CD4-positive, alpha-beta memory T cell (primary cell): ENCODE measurements at regions of chr2 and their contacts with region 1.

Region 1: GRCh38 chr2:11753886-11754699 is 7.7 kb downstream of the LPIN1 start:
- DNase-seq: peak; percentile 39 to 88 (median 44)
- H3K4me3 ChIP-seq: peak overlapping the region; percentile 19 to 43
- H3K4me3 Mint-ChIP-seq: peak overlapping the region; percentile 78 to 92 (median 84)
- H3K27ac ChIP-seq: peak overlapping the region; percentile 70
- H3K27ac Mint-ChIP-seq: peak overlapping the region; percentile 91 to 98 (median 95)
- H3K4me1 ChIP-seq: peaks cover 95% of the 10 kb centered on the region
- H3K4me1 Mint-ChIP-seq: peaks cover 60 to 93% (median 78%) of the 10 kb centered on the region in 4 donors
- H3K27me3 ChIP-seq: no peaks in the 10 kb centered on the region
- H3K27me3 Mint-ChIP-seq: no peaks in the 10 kb centered on the region

Region 2: GRCh38 chr2:11154923-11155380 is 599.1 kb before region 1 on chr2:
- CTCF ChIA-PET with region 1: no interaction called
- POLR2A ChIA-PET with region 1: no interaction called
- intact Hi-C with region 1: loop called (anchors 2 kb)
- DNase-seq: peak; percentile 95 to 98 (median 97)
- H3K4me3 ChIP-seq: peak overlapping the region; percentile 38 to 66
- H3K4me3 Mint-ChIP-seq: peak overlapping the region; percentile 81 to 88 (median 85)
- H3K27ac ChIP-seq: peak overlapping the region; percentile 68
- H3K27ac Mint-ChIP-seq: peak overlapping the region; percentile 85 to 93 (median 88)
- H3K4me1 ChIP-seq: peaks cover 23% of the 10 kb centered on the region
- H3K4me1 Mint-ChIP-seq: peaks cover 4 to 28% (median 21%) of the 10 kb centered on the region in 4 donors
- H3K27me3 ChIP-seq: no peaks in the 10 kb centered on the region
- H3K27me3 Mint-ChIP-seq: no peaks in the 10 kb centered on the region

Region 3: GRCh38 chr2:11738589-11739436 is 15.3 kb before region 1 on chr2:
- CTCF ChIA-PET with region 1: interaction called, 21 read pairs
- POLR2A ChIA-PET with region 1: interaction called, 46 read pairs
- intact Hi-C with region 1: no loop called
- DNase-seq: peak in 2 of 5 donors; percentile 31 to 49
- H3K4me3 ChIP-seq: no peak overlapping the region
- H3K4me3 Mint-ChIP-seq: no peak overlapping the region
- H3K27ac ChIP-seq: no peak overlapping the region
- H3K27ac Mint-ChIP-seq: peak overlapping the region in 1 of 7 donors; percentile 36
- H3K4me1 ChIP-seq: peaks cover 11% of the 10 kb centered on the region
- H3K4me1 Mint-ChIP-seq: peaks cover 3 to 20% (median 8%) of the 10 kb centered on the region in 4 donors
- H3K27me3 ChIP-seq: no peaks in the 10 kb centered on the region
- H3K27me3 Mint-ChIP-seq: peaks cover 0 to 3% of the 10 kb centered on the region in 2 donors

Region 4: DNA sequence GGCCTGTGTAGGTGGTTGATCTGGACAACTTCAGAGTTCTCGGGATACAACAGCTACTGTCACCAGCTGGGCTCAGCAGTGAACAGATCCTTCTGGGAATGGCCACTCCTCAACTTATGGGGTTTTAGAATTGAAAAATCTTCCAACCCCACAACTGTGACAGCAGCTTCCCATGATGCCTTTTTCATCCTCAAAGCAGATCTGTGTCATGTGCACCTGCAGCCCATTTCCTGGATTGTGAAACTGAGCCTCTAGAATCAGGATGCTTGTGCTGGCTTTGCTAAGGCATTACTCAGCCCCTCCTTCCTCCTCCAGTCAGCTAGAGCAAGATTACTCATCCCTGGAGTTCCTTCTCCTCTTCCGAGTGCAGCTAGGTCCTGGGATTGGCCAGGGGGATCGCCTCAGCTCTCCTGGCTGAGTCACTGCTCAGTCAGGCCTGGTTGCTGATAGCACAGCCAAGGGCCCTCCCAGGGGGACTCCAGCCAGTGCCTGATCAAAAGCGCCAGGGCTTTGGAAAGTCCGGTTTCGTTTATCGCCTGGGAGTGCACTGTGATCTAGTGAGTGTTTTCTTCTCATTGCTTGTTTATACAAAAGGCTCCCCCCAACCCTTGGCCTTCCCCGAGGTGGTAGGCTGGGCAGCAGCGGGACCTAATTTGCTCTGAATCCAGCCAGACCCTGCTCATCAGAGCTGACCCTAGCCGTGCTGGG is 10.1 kb before region 1 on chr2:
- CTCF ChIA-PET with region 1: interaction called, 27 read pairs
- POLR2A ChIA-PET with region 1: interaction called, 46 read pairs
- intact Hi-C with region 1: loop called (anchors 1 kb)
- DNase-seq: peak; percentile 59 to 91 (median 65)
- H3K4me3 ChIP-seq: peak overlapping the region; percentile 45 to 61
- H3K4me3 Mint-ChIP-seq: peak overlapping the region; percentile 49 to 92 (median 81)
- H3K27ac ChIP-seq: peak overlapping the region; percentile 48
- H3K27ac Mint-ChIP-seq: peak overlapping the region; percentile 71 to 98 (median 94)
- H3K4me1 ChIP-seq: peaks cover 56% of the 10 kb centered on the region
- H3K4me1 Mint-ChIP-seq: peaks cover 37 to 55% (median 44%) of the 10 kb centered on the region in 4 donors
- H3K27me3 ChIP-seq: no peaks in the 10 kb centered on the region
- H3K27me3 Mint-ChIP-seq: no peaks in the 10 kb centered on the region